IMR-90 (cell line): ENCODE measurements at regions of chr13 and their contacts with region 1.

Region 1: GRCh38 chr13:41054212-41054877 is 7.0 kb upstream of the WBP4 start:
- DNase-seq: peak; percentile 64
- ATAC-seq: peak; percentile 45
- H3K4me3 ChIP-seq: no peak overlapping the region
- H3K27ac ChIP-seq: no peak overlapping the region
- H3K4me1 ChIP-seq: peaks cover 14% of the 10 kb centered on the region
- H3K27me3 ChIP-seq: no peaks in the 10 kb centered on the region
- CTCF ChIP-seq: peak; percentile 53
- POLR2A ChIP-seq: no peak
- RAD21 ChIP-seq: peak; percentile 40

Region 2: DNA sequence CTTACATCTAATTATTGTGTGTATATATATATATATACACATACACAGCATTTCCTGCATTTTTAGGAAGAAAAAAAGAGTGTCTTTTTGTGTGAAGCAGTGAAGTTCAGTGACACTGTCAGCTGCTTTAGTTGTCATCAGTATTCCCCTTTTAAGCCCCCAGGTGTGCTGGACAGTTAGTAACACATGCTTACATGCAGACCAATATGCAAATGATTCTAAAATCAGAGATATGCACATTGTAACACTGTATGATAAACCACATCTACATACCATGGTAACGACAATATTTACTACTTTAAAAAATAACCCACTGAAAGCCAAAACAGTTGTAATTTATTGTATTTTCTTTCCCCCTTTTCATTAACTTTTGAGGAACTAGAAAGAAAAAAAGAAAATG is 1468.2 kb before region 1 on chr13:
- CTCF ChIA-PET with region 1: no interaction called
- POLR2A ChIA-PET with region 1: no interaction called
- dilution Hi-C with region 1: no loop called
- in situ Hi-C with region 1: no loop called
- intact Hi-C with region 1: no loop called
- DNase-seq: no peak
- ATAC-seq: no peak
- H3K4me3 ChIP-seq: no peak overlapping the region
- H3K27ac ChIP-seq: no peak overlapping the region
- H3K4me1 ChIP-seq: peaks cover 6% of the 10 kb centered on the region
- H3K27me3 ChIP-seq: no peaks in the 10 kb centered on the region
- CTCF ChIP-seq: no peak
- POLR2A ChIP-seq: no peak
- RAD21 ChIP-seq: no peak

Region 3: DNA sequence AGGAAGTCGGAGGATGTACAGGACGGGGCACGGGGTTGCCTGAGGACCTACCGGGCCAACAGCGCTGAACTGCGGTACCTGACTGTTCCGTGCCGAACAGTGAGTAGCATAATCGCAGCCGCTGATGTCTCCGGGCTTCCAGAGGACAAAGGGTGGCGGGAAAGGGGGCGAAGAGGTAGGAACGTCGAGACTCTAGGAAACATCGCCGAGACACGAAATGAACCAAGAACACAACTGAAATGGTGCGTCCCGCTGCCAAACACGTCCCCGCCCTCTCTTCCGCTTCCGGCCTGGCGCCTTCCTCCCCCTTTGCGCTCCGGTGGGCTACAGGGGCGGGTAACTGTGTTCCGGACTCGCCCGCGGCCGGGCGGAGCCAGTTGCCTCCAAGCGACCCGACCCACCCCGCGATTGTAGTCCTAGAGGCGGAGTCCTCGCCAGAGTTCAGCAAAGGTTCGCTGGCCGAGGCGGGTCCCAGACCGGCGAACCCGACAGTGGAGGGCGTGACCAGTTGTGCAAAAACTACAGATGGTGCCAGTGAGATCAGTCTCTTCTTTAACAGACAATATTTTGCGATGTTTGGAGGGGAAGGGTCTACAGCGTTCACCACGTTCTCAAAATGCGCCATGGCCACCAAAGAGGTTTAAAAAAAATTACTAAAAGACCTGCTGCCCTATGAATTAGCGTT is 283.3 kb before region 1 on chr13 and contains the start of gene MRPS31:
- CTCF ChIA-PET with region 1: no interaction called
- POLR2A ChIA-PET with region 1: no interaction called
- dilution Hi-C with region 1: no loop called
- in situ Hi-C with region 1: no loop called
- intact Hi-C with region 1: loop called (anchors 10 kb)
- DNase-seq: peak; percentile 91
- ATAC-seq: peak; percentile 100
- H3K4me3 ChIP-seq: peak within 1 kb of the TSS; percentile 94
- H3K27ac ChIP-seq: peak within 1 kb of the TSS; percentile 88
- H3K4me1 ChIP-seq: no peaks in the 10 kb centered on the region
- H3K27me3 ChIP-seq: no peaks in the 10 kb centered on the region
- CTCF ChIP-seq: no peak
- POLR2A ChIP-seq: peak; percentile 51; the same call in 1 of the 2 replicates
- RAD21 ChIP-seq: no peak
- total RNA-seq, gene MRPS31: 9.3 and 15.3 TPM in 2 replicates

Region 4: DNA sequence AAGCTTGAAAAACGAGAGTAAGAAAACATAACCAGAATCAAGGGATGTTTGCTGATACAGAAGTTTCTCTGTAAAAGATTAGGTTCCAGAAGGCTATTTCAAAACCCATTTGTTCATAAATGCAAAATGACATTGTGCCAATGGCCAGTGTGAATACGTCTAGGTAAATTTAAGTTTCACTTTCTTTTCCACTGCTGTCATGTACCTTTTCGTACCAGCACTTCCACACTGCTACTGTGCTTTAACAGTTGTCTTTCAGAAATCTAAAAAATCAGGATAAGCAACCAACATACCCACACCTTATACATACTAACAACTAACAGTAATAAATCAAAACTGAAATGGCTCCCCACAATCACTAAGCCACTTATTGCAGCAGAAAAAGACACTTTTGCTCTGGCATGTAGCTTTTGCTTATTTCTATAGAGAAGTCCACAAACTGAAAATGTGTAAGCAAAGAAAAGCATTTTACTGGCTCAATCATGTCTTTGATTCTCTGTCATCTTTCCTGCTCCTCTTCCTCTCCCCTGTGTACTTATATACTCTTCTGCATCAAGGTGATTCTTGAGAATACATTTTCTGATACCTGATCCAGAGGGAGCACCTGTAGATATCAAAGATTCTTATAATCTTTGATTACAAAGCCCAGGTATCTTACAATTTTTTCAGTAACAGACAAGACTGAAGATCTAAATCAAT is 69.5 kb before region 1 on chr13:
- CTCF ChIA-PET with region 1: no interaction called
- POLR2A ChIA-PET with region 1: no interaction called
- dilution Hi-C with region 1: no loop called
- in situ Hi-C with region 1: no loop called
- intact Hi-C with region 1: loop called (anchors 5 kb)
- DNase-seq: no peak
- ATAC-seq: no peak
- H3K4me3 ChIP-seq: no peak overlapping the region
- H3K27ac ChIP-seq: no peak overlapping the region
- H3K4me1 ChIP-seq: peaks cover 5% of the 10 kb centered on the region; the same call in 1 of the 2 replicates
- H3K27me3 ChIP-seq: no peaks in the 10 kb centered on the region
- CTCF ChIP-seq: no peak
- POLR2A ChIP-seq: no peak
- RAD21 ChIP-seq: no peak

Region 5: DNA sequence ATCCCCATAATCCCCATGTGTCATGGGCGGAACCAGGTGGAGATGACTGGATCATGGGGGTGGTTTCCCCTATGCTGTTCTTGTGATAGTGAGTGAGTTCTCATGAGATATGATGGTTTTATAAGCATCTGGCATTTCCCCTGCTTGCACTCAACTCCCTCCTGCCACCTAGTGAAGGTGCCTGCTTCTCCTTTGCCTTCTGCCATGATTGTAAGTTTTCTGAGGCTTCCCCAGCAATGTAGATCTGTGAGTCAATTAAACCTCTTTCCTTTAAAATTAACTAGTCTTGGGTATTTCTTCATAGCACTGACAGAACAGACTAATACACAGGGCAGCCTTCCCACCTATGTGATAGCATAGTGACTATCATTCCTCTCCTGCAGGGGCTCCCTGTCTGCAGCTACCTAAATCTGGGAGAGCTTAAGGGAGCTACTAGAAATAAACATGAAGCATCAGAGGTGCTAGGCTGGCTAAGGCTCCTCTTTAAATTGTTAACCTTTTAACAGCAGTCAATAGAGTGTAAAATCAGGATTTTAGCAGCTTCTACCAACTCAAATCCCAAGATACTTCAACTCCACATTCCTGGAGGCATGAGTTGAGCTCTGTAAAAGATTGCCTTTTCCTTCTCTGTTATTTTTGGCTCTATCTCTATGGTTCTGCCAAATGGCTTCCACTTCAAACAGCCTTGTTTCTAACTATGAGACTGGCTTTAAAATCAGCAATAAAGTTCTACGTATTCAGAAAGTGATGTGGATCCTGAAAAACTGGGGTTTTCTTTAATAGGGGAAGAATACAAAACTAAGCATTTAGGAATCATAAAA is 794.3 kb after region 1 on chr13:
- CTCF ChIA-PET with region 1: no interaction called
- POLR2A ChIA-PET with region 1: no interaction called
- dilution Hi-C with region 1: no loop called
- in situ Hi-C with region 1: no loop called
- intact Hi-C with region 1: no loop called
- DNase-seq: peak; percentile 52
- ATAC-seq: peak; percentile 76
- H3K4me3 ChIP-seq: no peak overlapping the region
- H3K27ac ChIP-seq: no peak overlapping the region
- H3K4me1 ChIP-seq: peaks cover 2% of the 10 kb centered on the region; the same call in 1 of the 2 replicates
- H3K27me3 ChIP-seq: no peaks in the 10 kb centered on the region
- CTCF ChIP-seq: no peak
- POLR2A ChIP-seq: no peak
- RAD21 ChIP-seq: no peak